IMR-90 (cell line): ENCODE measurements at regions of chr17 and their contacts with region 1.

Region 1: GRCh38 chr17:41811549-41812380 is at the start of gene P3H4:
- DNase-seq: peak; percentile 80
- ATAC-seq: peak; percentile 70
- H3K4me3 ChIP-seq: peak within 1 kb of the TSS; percentile 88
- H3K27ac ChIP-seq: peak within 1 kb of the TSS; percentile 93
- H3K4me1 ChIP-seq: peaks cover 20% of the 10 kb centered on the region
- H3K27me3 ChIP-seq: no peaks in the 10 kb centered on the region
- CTCF ChIP-seq: peak; percentile 66
- POLR2A ChIP-seq: 0 out of 2 replicates have a peak, but pooled peaks have one; percentile 30
- RAD21 ChIP-seq: peak; percentile 44
- total RNA-seq, gene P3H4: 21.5 and 22.2 TPM in 2 replicates

Region 2: DNA sequence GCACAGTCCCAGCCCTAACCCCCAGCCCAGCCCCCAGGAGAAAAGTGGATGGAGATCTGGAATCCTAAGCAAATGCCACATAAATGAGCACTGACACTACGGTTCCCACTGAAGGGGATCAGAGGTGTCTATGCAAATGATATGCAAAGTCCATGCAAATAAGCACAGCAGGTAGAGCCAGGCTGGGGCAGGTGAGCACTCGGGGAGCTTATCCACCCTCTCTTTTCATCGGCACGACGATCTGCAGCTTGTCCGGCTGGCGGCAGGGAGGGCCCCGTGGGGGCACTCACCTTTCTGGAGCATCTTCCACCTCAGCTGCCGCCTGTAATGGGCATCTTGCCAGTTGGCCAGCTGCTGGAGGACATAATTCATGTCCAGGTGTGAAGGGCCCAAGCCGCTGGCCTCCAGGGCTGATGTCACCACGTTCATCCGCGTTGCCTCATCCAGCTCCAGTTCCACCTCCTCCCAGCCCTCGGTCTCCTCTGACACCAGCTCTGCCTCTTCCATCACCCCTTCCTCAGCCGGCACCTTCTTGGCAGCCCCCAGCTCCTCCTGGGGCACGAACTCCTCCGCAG is 87.2 kb before region 1 on chr17:
- CTCF ChIA-PET with region 1: no interaction called
- POLR2A ChIA-PET with region 1: no interaction called
- dilution Hi-C with region 1: no loop called
- in situ Hi-C with region 1: no loop called
- intact Hi-C with region 1: no loop called
- DNase-seq: no peak
- ATAC-seq: no peak
- H3K4me3 ChIP-seq: no peak overlapping the region
- H3K27ac ChIP-seq: no peak overlapping the region
- H3K4me1 ChIP-seq: no peaks in the 10 kb centered on the region
- H3K27me3 ChIP-seq: peaks cover 13% of the 10 kb centered on the region
- CTCF ChIP-seq: no peak
- POLR2A ChIP-seq: no peak
- RAD21 ChIP-seq: no peak

Region 3: DNA sequence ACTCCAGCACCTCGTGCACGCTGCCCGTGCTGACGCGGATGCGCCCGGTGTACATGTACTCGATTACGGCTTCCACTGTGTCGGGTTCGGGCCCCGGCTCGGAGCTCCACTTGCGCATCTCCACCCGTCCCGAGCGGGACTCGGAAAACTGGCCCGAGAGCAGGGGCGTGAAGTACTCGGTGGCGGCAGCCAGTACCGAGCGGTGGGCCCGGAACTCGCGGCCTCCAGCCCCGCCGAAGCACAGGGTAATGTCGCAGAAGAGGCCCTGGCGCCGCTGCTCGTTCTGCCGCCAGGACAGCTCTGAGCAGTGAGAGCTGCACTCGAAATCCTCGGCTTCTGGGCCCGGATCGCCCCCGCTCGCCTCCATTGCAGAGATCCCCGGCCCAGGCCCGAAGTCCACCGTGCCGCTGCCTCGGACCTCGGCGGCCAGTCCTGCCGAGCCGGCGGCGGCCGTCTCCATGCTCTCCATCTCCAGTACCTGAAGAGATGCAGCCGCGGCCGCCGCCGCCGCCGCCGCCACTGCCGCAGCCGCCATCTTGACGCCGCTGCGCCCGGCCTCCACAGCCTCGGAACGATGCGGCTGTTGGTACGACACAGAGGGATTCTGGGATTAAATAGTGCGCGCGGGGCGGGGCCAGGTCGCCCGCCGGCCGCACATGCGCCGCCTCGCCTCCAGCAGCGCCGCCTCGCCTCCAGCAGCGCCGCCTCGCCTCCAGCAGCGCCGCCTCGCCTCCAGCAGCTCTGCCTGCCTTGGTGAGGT is 53.3 kb after region 1 on chr17 and contains the start of gene KLHL11:
- CTCF ChIA-PET with region 1: no interaction called
- POLR2A ChIA-PET with region 1: no interaction called
- dilution Hi-C with region 1: no loop called
- in situ Hi-C with region 1: no loop called
- intact Hi-C with region 1: loop called (anchors 2 kb)
- DNase-seq: peak; percentile 85
- ATAC-seq: peak; percentile 95
- H3K4me3 ChIP-seq: peak within 1 kb of the TSS; percentile 83
- H3K27ac ChIP-seq: peak within 1 kb of the TSS; percentile 72
- H3K4me1 ChIP-seq: peaks cover 11% of the 10 kb centered on the region
- H3K27me3 ChIP-seq: no peaks in the 10 kb centered on the region
- CTCF ChIP-seq: no peak
- POLR2A ChIP-seq: peak; percentile 79
- RAD21 ChIP-seq: peak; percentile 10; the same call in 1 of the 2 replicates
- total RNA-seq, gene KLHL11: 38.5 and 43.6 TPM in 2 replicates

Region 4: DNA sequence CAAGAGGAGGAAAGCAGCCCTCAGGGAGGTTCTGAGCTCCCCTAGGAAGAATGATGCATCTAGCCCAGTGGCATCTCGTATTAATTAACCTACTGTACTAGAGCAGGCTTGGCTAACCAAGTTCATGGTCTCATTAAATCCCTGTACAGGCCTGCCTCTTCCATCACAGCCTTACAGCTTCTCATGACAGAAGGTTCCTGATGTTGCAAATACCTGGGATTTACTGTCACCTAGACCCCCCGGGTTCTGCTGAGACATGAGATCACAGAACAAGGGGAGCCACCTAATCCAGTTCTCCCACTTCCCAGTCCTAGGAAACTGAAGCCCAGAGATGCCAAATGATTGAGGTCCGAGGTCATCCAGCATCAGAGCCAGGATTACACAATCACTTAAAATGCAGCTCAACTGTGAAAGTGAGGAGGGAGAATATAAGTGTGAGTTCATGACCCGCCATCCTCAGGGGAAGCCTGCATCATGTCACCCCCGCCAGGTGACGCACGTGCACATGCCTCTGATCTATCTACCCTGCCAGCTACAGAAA is 83.1 kb after region 1 on chr17:
- CTCF ChIA-PET with region 1: no interaction called
- POLR2A ChIA-PET with region 1: no interaction called
- dilution Hi-C with region 1: no loop called
- in situ Hi-C with region 1: no loop called
- intact Hi-C with region 1: no loop called
- DNase-seq: peak; percentile 90
- ATAC-seq: peak; percentile 82
- H3K4me3 ChIP-seq: no peak overlapping the region
- H3K27ac ChIP-seq: peak overlapping the region; percentile 75
- H3K4me1 ChIP-seq: peaks cover 18% of the 10 kb centered on the region
- H3K27me3 ChIP-seq: no peaks in the 10 kb centered on the region
- CTCF ChIP-seq: no peak
- POLR2A ChIP-seq: no peak
- RAD21 ChIP-seq: peak; percentile 5; the same call in 1 of the 2 replicates

Region 5: GRCh38 chr17:41918314-41919164 is 106.8 kb after region 1 on chr17 and contains the start of gene ACLY:
- CTCF ChIA-PET with region 1: no interaction called
- POLR2A ChIA-PET with region 1: interaction called, 6 read pairs
- dilution Hi-C with region 1: no loop called
- in situ Hi-C with region 1: no loop called
- intact Hi-C with region 1: loop called (anchors 1 kb)
- DNase-seq: peak; percentile 95
- ATAC-seq: peak; percentile 96
- H3K4me3 ChIP-seq: peak within 1 kb of the TSS; percentile 72
- H3K27ac ChIP-seq: peak within 1 kb of the TSS; percentile 73
- H3K4me1 ChIP-seq: peaks cover 27% of the 10 kb centered on the region
- H3K27me3 ChIP-seq: no peaks in the 10 kb centered on the region
- CTCF ChIP-seq: no peak
- POLR2A ChIP-seq: peak; percentile 96
- RAD21 ChIP-seq: no peak
- total RNA-seq, gene ACLY: 228 and 230 TPM in 2 replicates

Region 6: GRCh38 chr17:41959336-41960095 is 147.8 kb after region 1 on chr17:
- CTCF ChIA-PET with region 1: no interaction called
- POLR2A ChIA-PET with region 1: no interaction called
- dilution Hi-C with region 1: no loop called
- in situ Hi-C with region 1: no loop called
- intact Hi-C with region 1: loop called (anchors 2 kb)
- DNase-seq: peak; percentile 66
- ATAC-seq: peak; percentile 75
- H3K4me3 ChIP-seq: no peak overlapping the region
- H3K27ac ChIP-seq: no peak overlapping the region
- H3K4me1 ChIP-seq: peaks cover 12% of the 10 kb centered on the region
- H3K27me3 ChIP-seq: no peaks in the 10 kb centered on the region
- CTCF ChIP-seq: peak; percentile 56
- POLR2A ChIP-seq: no peak
- RAD21 ChIP-seq: peak; percentile 61